ENCODE measurements at regions of chr18 and their contacts with region 1.

Region 1: DNA sequence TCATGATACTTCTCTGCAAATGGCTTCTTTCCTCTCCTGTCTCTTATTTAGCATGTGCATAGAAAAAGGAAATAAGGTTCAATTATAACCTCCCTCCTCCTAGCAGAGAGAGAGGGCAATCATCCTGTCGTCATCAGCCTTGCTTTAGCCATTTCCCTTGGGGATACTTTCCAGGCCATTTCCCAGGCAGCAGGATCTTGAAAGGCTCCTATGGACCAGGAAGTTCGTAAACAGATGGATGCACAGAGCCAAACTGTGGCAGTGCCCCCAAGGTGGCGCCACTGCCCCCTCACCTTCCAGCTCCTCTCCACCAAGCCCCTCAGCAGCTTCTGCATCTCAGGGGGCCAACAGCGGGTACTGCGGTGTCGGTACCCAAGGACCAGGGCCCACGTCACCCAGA is 157.4 kb downstream of the DTNA start:
- DNase-seq: peak in 1 of 4 experiments; percentile 12
- ATAC-seq: peak; percentile 37; the same call in 1 of the 3 replicates
- H3K4me3 ChIP-seq: no peak overlapping the region
- H3K27ac ChIP-seq: no peak overlapping the region
- H3K4me1 ChIP-seq: no peaks in the 10 kb centered on the region
- H3K27me3 ChIP-seq: no peaks in the 10 kb centered on the region
- CTCF ChIP-seq: 0 out of 6 replicates have a peak, but pooled peaks have one; percentile 16 to 27 (median 19)
- EP300 ChIP-seq: no peak
- POLR2A ChIP-seq: no peak
- RAD21 ChIP-seq: peak; percentile 13 to 31; a peak in 2 of 4 replicates

Region 2: GRCh38 chr18:35159782-35160181 is 292.3 kb after region 1 on chr18:
- CTCF ChIA-PET with region 1: no interaction called
- POLR2A ChIA-PET with region 1: no interaction called
- in situ Hi-C with region 1: no loop called
- intact Hi-C with region 1: loop called (anchors 10 kb)
- DNase-seq: no peak
- ATAC-seq: peak; percentile 41; the same call in 2 of the 3 replicates
- H3K4me3 ChIP-seq: no peak overlapping the region
- H3K27ac ChIP-seq: no peak overlapping the region
- H3K4me1 ChIP-seq: no peaks in the 10 kb centered on the region; a peak in 1 of 5 replicates
- H3K27me3 ChIP-seq: peaks cover 4 to 5% of the 10 kb centered on the region in 2 experiments; a peak in 2 of 5 replicates
- CTCF ChIP-seq: no peak
- EP300 ChIP-seq: no peak
- POLR2A ChIP-seq: no peak
- RAD21 ChIP-seq: no peak

Region 3: DNA sequence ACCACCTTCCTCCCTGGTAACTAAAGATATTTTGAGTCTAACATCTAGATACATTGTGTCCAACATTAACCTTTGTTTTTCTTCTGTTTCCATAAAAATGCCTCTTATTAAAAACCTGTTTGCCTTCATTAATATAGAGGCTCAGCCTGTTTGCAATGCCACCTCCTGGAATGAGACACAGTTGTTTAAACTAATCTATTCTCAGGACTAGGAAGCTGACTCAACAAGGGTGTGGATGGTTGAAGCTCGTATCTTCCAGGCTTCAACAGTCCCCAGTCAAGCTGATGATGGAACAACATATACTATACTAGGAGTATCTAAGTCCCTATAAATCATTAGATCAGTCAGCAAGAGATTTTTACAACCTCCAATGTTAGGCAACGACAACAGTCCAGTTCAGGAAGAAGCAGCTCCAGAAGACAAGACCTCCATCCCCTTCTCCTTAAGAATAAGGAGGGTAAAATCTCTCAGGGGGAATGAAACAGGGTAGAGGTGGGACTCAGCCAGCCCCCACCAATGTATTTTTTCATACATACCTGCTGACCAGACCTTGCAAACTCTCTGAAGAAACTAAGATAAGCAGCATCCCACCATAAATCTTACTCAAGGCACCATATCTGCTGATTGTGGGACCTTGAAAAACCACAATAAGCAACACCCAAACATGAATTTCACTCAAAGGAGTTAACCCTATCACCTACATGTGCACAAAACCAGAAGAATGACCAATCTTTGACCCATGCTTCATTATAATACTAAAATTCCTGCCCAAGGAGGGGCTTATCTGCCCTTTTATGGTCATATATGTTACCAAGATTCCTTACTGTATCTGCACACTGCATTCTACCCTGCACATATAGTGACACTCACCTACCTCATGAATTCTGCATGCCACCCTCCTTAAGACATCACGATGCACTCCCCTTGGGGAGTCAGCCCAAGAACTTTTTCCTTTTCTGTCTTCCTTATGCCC is 455.3 kb after region 1 on chr18:
- CTCF ChIA-PET with region 1: no interaction called
- POLR2A ChIA-PET with region 1: no interaction called
- in situ Hi-C with region 1: no loop called
- intact Hi-C with region 1: no loop called
- DNase-seq: peak in 1 of 4 experiments; percentile 30
- ATAC-seq: peak; percentile 53
- H3K4me3 ChIP-seq: no peak overlapping the region
- H3K27ac ChIP-seq: no peak overlapping the region
- H3K4me1 ChIP-seq: peaks cover 0 to 16% of the 10 kb centered on the region in 2 experiments; a peak in 3 of 5 replicates
- H3K27me3 ChIP-seq: no peaks in the 10 kb centered on the region
- CTCF ChIP-seq: 0 out of 6 replicates have a peak, but pooled peaks of 1 of the 3 experiments have one; percentile 13
- EP300 ChIP-seq: no peak
- POLR2A ChIP-seq: no peak
- RAD21 ChIP-seq: peak in 1 of 2 experiments; percentile 7; a peak in 1 of 4 replicates

Region 4: DNA sequence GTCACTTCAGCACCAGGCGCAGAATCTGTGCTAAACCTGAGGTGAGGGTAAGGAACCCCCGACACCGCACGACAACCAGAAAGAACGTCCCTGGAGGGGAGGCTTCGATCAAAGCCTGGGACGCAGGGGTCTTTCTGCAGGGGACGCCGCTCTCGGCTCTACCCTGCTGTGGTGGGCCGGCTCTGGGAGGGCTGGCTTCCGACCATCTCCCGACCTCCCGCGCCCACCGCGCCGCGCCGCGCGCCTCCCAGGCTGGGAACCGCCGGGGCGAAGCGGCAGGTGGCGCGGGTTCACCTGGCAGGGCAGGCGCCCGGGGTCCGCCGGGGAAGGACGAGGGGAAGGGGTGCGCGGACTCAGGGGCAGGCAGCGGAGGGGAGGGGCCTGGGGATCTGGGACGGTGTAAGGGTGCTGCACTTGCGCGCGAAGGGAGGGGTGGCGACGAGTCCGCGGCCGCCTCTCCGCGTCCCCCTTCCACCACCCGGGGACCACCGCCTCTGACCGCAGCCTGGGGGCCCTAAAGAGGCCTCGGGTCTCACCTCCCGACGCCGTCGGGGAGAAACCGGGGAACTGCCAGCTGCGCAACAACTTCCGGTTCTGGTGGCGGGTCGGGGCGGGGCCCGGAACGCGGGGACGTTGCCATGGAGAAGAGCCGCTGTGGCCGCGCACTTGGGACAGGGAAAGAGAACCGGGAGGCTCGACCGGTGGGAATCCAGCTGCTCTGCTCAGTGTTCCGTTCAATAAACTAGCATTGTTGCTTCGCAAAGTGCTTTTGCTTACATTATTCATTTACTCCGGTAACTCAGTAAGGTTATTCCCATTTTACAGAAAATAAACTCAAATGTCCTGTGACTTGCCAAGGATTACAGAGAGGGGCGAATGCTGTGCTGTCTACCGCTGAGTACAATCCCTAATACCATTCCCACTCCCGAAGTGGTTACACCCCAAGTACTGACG is 509.5 kb after region 1 on chr18 and contains the start of gene ZNF396:
- CTCF ChIA-PET with region 1: no interaction called
- POLR2A ChIA-PET with region 1: no interaction called
- in situ Hi-C with region 1: no loop called
- intact Hi-C with region 1: loop called (anchors 10 kb)
- DNase-seq: peak; percentile 85 to 90 (median 86)
- ATAC-seq: peak; percentile 92
- H3K4me3 ChIP-seq: peak within 1 kb of the TSS; percentile 72
- H3K27ac ChIP-seq: peak within 1 kb of the TSS; percentile 47
- H3K4me1 ChIP-seq: peaks cover 4 to 12% of the 10 kb centered on the region in 2 experiments; a peak in 3 of 5 replicates
- H3K27me3 ChIP-seq: 0 out of 5 replicates have a peak, but pooled peaks cover 0 to 2% of the 10 kb centered on the region in 2 experiments
- CTCF ChIP-seq: no peak; a peak in 1 of 6 replicates
- EP300 ChIP-seq: no peak
- POLR2A ChIP-seq: peak; percentile 50
- RAD21 ChIP-seq: no peak
- polyA plus RNA-seq, gene ZNF396: 2.0 to 2.3 TPM

Measured in K562 (cell line).